ENCODE measurements at regions of chr1 and their contacts with region 1.

Region 1: GRCh38 chr1:159798893-159799292 is 3.3 kb upstream of the FCRL6 start:
- DNase-seq: no peak

Region 2: DNA sequence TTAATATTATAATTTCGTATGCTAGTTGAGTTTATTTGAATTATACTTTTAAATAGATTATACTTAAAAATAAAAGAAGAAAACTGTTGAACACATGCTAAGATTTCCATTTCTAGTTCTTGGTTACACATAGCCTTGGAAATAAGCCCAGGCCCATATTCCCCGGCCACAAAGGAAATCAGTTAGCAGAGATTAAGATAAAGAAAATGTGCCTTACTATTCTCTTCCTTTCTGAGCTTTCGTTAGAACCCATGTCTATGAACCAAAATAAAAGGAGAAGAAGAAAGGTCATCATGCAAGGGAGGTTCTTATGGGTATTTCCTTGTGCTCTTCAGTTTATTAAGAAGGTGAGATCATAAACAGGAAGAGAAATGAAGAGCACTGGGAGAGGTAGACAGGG is 52.2 kb before region 1 on chr1:
- intact Hi-C with region 1: no loop called
- DNase-seq: no peak

Region 3: GRCh38 chr1:159891275-159892157 is 92.6 kb after region 1 on chr1:
- intact Hi-C with region 1: loop called (anchors 5 to 10 kb)
- DNase-seq: peak; percentile 92

Measured in posterior vena cava (tissue), 2 donors.